WTC11 (cell line): ENCODE measurements at regions of chr15 and their contacts with region 1.

Region 1: GRCh38 chr15:66401130-66402021 is 14.7 kb downstream of the MAP2K1 start:
- DNase-seq: peak; percentile 28
- ATAC-seq: peak; percentile 31; the same call in 1 of the 2 replicates
- H3K4me3 Mint-ChIP-seq: no peak overlapping the region; the same call in 1 of the 2 replicates
- H3K27ac Mint-ChIP-seq: peak overlapping the region; percentile 91
- H3K4me1 Mint-ChIP-seq: peaks cover 70% of the 10 kb centered on the region
- H3K27me3 Mint-ChIP-seq: no peaks in the 10 kb centered on the region
- CTCF ChIP-seq: no peak

Region 2: GRCh38 chr15:66115568-66116206 is 285.7 kb before region 1 on chr15:
- CTCF ChIA-PET with region 1: no interaction called
- POLR2A ChIA-PET with region 1: no interaction called
- DNase-seq: peak; percentile 29
- ATAC-seq: peak; percentile 53
- H3K4me3 Mint-ChIP-seq: no peak overlapping the region
- H3K27ac Mint-ChIP-seq: no peak overlapping the region
- H3K4me1 Mint-ChIP-seq: peaks cover 28% of the 10 kb centered on the region
- H3K27me3 Mint-ChIP-seq: no peaks in the 10 kb centered on the region; the same call in 1 of the 2 replicates
- CTCF ChIP-seq: no peak

Region 3: GRCh38 chr15:66386204-66387123 is 14.9 kb before region 1 on chr15 and contains the start of gene MAP2K1:
- CTCF ChIA-PET with region 1: interaction called, 24 read pairs
- POLR2A ChIA-PET with region 1: interaction called, 4 read pairs
- DNase-seq: peak; percentile 96
- ATAC-seq: peak; percentile 91
- H3K4me3 Mint-ChIP-seq: peak within 1 kb of the TSS; percentile 96
- H3K27ac Mint-ChIP-seq: peak within 1 kb of the TSS; percentile 100
- H3K4me1 Mint-ChIP-seq: peaks cover 40% of the 10 kb centered on the region
- H3K27me3 Mint-ChIP-seq: peaks cover 3% of the 10 kb centered on the region; the same call in 1 of the 2 replicates
- CTCF ChIP-seq: no peak
- total RNA-seq, gene MAP2K1: 89.5 to 93.0 TPM (median 90.4 TPM) in 3 replicates